ENCODE measurements at regions of chr20 and their contacts with region 1.

Region 1: DNA sequence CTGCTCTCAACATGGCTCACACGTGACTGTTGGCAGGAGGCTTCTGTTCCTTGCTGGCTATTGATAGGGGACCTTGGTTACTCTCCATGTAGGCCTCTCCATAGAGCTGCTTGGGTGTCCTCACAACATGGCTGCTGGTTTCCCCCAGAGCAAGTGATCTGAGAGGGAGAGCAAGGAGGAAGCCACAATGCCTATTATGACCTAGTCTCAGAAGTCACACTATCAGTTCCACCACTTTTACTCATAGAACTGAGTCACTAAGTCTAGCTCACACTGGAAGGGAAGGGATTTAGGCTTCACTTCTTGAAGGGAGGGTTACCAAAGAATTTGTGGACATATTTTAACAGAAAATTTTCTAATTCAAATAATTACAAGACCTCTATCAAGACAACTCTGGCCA is 8.7 kb upstream of the NOP56 start:
- DNase-seq: no peak
- ATAC-seq: no peak
- H3K4me3 ChIP-seq: no peak overlapping the region
- H3K27ac ChIP-seq: no peak overlapping the region
- H3K4me1 ChIP-seq: no peaks in the 10 kb centered on the region; a peak in 1 of 5 replicates
- H3K27me3 ChIP-seq: peaks cover 0 to 6% of the 10 kb centered on the region in 2 experiments; a peak in 2 of 5 replicates
- CTCF ChIP-seq: no peak
- EP300 ChIP-seq: no peak
- POLR2A ChIP-seq: no peak
- RAD21 ChIP-seq: no peak

Region 2: GRCh38 chr20:2051946-2052345 is 591.8 kb before region 1 on chr20:
- CTCF ChIA-PET with region 1: no interaction called
- POLR2A ChIA-PET with region 1: no interaction called
- in situ Hi-C with region 1: no loop called
- intact Hi-C with region 1: no loop called
- DNase-seq: no peak
- ATAC-seq: no peak
- H3K4me3 ChIP-seq: no peak overlapping the region
- H3K27ac ChIP-seq: no peak overlapping the region
- H3K4me1 ChIP-seq: no peaks in the 10 kb centered on the region
- H3K27me3 ChIP-seq: peaks cover 0 to 5% of the 10 kb centered on the region in 2 experiments; a peak in 1 of 5 replicates
- CTCF ChIP-seq: no peak
- EP300 ChIP-seq: no peak
- POLR2A ChIP-seq: no peak
- RAD21 ChIP-seq: no peak

Region 3: GRCh38 chr20:2578475-2579192 is 65.1 kb before region 1 on chr20:
- CTCF ChIA-PET with region 1: no interaction called
- POLR2A ChIA-PET with region 1: no interaction called
- in situ Hi-C with region 1: no loop called
- intact Hi-C with region 1: loop called (anchors 10 kb)
- DNase-seq: peak; percentile 21 to 47 (median 29)
- ATAC-seq: peak; percentile 56
- H3K4me3 ChIP-seq: no peak overlapping the region
- H3K27ac ChIP-seq: no peak overlapping the region
- H3K4me1 ChIP-seq: peaks cover 4 to 6% of the 10 kb centered on the region in 2 experiments; a peak in 3 of 5 replicates
- H3K27me3 ChIP-seq: peaks cover 0 to 4% of the 10 kb centered on the region in 2 experiments; a peak in 1 of 5 replicates
- CTCF ChIP-seq: no peak
- EP300 ChIP-seq: no peak
- POLR2A ChIP-seq: no peak
- RAD21 ChIP-seq: no peak